Left cardiac atrium (tissue), 4 donors: ENCODE measurements at regions of chr9 and their contacts with region 1.

Region 1: DNA sequence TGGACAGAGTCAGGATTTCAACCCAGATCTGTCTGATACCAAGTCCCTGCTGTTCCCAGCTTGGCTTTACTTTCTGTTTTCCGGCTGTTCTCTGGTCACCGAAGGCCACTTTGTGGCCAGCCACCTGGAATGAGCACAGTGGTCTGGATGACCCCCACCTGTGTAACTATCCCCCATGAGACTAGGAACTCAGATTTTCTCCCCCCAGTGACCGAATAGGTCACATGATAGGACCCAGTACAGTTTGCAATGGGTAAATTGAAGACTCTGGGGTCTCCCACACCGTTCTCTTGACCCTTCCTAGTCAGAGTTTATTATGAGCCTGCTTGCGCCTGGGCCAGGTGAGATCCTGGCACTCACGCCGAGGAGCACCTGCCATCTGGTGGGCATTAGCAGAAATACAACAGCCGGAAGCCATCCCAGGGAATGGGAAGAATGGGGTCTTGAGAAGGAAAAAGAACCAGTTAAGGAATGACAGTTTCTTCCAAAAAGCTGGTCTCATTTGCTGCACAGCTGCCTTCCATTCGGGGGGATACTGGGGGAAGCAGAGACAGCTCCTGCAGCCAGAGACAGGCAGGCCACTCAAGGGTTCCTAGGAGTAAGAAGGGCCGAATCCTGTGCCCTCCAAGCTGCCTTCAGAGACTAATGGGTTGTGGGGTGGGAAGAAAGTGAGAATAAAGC is 7.1 kb downstream of the PHYHD1 start:
- DNase-seq: peak; percentile 49
- ATAC-seq: peak; percentile 71 to 83

Region 2: DNA sequence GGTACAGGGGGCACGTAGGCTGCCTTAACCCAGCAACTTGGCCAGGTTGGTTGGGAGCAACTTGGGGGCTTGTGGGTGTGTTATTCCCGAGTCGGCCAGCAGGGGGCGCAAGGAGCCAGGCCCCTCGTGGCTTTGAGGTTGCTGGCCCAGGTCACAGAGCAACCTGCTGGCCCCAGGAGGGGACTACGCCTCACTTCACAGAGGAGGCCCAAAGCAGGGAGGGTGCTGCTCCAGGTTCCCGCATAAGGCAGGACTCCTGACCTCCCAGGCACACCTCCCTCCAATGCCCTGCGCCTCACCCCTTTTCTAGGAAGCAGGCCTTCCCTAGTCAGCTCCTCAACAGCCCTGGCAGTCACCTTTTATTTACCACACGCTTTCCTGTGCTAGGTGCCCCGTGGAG is 64.2 kb before region 1 on chr9:
- intact Hi-C with region 1: loop called (anchors 1 to 2 kb)
- DNase-seq: peak; percentile 75
- ATAC-seq: peak; percentile 80 to 87

Region 3: GRCh38 chr9:128881901-128882681 is 45.8 kb before region 1 on chr9 and contains the starts of genes KYAT1 and LRRC8A:
- intact Hi-C with region 1: loop called in 1 of 2 experiments (anchors 5 kb)
- DNase-seq: peak; percentile 98
- ATAC-seq: peak; percentile 92 to 94
- total RNA-seq, gene KYAT1: 10.4 to 10.8 TPM
- total RNA-seq, gene LRRC8A: 23.7 to 47.8 TPM

Region 4: DNA sequence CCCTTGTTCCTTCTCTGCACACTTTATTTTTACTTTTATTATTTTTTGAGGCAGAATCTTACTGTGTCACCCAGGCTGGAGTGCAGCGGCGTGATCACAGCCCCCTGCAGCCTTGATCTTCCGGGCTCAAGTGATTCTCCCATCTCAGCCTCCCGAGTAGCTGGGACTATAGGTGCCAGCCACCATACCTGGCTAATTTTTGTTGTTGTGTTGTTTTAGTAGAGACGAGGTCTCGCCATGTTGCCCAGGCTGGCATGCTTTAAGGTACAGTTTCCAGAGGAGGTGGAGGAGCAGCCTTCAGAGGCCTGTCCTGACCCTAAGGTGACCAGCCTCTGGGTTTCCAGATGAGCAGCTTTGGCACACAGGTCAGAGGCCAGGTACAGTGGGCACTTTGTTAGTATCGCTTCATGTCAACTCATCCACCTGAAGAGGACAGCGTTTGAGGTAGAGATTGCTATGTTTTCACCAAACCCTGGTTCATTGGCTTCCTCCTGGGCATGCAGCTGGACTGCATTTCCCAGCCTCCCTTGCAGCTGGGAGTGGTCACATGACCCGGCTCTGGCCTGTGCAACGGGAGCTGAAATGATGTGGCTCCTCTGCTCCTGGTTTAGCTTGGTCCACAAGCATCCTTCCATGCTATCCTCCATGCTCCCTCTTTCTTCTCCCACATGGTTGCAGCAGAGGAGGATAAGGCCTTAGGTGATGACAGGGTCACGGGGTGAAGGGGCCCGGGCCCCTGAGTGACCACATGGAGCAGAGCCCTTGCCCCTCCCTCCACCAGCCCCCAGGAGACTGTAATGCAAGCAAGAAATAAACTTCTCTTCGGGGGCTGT is 389.5 kb after region 1 on chr9:
- intact Hi-C with region 1: no loop called
- DNase-seq: peak; percentile 56
- ATAC-seq: peak in 1 of 2 donors; percentile 6